ENCODE measurements at regions of chr10 and their contacts with region 1.

Region 1: GRCh38 chr10:123967396-123968243 is 76.0 kb upstream of the CPXM2 start:
- DNase-seq: peak; percentile 57
- ATAC-seq: peak; percentile 33
- H3K4me3 Mint-ChIP-seq: no peak overlapping the region
- H3K27ac Mint-ChIP-seq: no peak overlapping the region
- H3K4me1 Mint-ChIP-seq: no peaks in the 10 kb centered on the region
- H3K27me3 Mint-ChIP-seq: peaks cover 21% of the 10 kb centered on the region

Region 2: GRCh38 chr10:123582084-123582989 is 385.3 kb before region 1 on chr10:
- CTCF ChIA-PET with region 1: interaction called, 13 read pairs
- DNase-seq: peak; percentile 75
- ATAC-seq: peak; percentile 57
- H3K4me3 Mint-ChIP-seq: no peak overlapping the region
- H3K27ac Mint-ChIP-seq: no peak overlapping the region
- H3K4me1 Mint-ChIP-seq: no peaks in the 10 kb centered on the region
- H3K27me3 Mint-ChIP-seq: peaks cover 25% of the 10 kb centered on the region

Region 3: DNA sequence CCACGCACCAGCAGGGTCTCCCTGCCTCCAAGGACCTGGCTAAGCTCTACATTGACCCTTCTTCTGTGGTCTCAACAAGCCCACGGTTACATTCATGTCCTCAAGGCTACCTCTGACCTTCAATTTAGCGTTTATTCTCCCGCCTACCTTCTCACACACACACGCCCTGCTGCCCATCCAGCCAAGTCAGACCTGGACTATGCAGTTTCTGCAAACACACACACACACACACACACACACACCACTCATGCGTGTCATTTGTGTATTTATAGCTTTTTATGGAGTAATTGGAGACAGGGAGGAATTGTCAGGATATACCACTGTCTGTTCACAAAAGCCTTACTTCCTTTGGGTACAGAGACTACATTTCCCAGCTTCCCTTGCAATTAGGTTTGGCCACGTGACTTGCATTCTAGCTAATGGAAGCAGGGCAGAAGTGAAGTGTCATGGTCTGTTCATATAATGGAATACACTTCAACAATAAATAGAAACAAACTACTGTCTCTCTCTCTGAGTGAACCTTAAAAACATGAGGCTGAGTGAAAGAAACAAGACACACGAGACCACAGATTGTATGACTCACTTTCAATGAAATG is 22.2 kb before region 1 on chr10:
- CTCF ChIA-PET with region 1: no interaction called
- DNase-seq: no peak
- ATAC-seq: no peak
- H3K4me3 Mint-ChIP-seq: no peak overlapping the region
- H3K27ac Mint-ChIP-seq: no peak overlapping the region
- H3K4me1 Mint-ChIP-seq: no peaks in the 10 kb centered on the region
- H3K27me3 Mint-ChIP-seq: no peaks in the 10 kb centered on the region

Region 4: DNA sequence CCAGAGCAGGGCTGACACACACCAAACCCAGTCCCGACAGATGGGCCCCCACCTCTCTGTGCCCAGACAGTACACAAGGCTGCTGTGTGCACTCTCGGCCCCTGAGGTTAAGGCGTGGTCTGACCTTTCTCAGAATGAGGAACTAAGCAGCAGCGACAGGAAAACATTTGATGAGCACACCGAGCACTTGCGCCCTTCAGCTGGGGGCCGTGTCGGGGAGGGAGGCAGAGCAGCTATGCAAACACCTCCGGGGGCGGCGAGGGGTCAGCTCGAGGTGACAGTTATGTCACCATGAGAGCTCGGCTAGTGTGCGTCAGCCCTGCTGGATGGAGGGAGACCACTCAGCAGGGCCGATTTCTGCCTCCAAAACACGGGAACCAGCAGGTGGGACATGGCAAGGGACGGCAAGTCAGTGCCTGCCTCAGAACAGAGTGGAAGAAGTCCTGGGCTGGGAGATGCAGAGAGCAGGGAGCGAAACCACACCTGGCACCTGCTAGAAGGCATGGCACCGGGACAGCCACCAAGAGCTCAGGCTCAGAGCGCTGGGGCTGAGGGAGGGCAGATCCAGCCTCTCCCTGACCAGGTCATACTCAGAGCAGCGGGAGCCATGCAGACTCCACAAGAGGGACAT is 68.4 kb after region 1 on chr10:
- CTCF ChIA-PET with region 1: no interaction called
- DNase-seq: peak; percentile 64
- ATAC-seq: peak; percentile 85
- H3K4me3 Mint-ChIP-seq: peak overlapping the region; percentile 28
- H3K27ac Mint-ChIP-seq: peak overlapping the region; percentile 63
- H3K4me1 Mint-ChIP-seq: peaks cover 10% of the 10 kb centered on the region
- H3K27me3 Mint-ChIP-seq: peaks cover 11% of the 10 kb centered on the region

Region 5: DNA sequence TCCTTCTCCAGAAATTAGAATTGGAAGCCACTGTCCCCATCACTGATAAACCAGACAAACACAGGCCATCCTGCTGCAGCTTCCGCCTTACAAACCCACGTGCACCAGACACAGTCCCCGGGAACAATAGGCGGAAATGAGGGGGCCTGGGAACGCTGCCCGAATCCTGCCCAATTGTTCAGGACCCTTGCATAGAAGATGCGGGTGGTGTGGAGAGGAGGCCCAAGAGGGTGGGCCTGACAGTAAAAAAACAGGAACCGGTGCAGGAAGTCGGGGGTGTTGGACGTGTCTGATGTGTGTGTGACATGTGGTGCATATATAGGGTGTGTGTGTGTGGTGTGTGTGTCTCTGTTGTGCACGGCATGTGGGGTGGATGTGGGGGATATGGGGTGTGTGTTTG is 152.3 kb after region 1 on chr10:
- CTCF ChIA-PET with region 1: no interaction called
- DNase-seq: no peak
- ATAC-seq: no peak
- H3K4me3 Mint-ChIP-seq: no peak overlapping the region
- H3K27ac Mint-ChIP-seq: no peak overlapping the region
- H3K4me1 Mint-ChIP-seq: no peaks in the 10 kb centered on the region
- H3K27me3 Mint-ChIP-seq: no peaks in the 10 kb centered on the region

Measured in activated CD8-positive, alpha-beta memory T cell treated with anti-CD3 and anti-CD28 coated beads, Interleukin-2, amount 10 ng/mL, durations not matched to agents 7 days and 5 days (primary cell).